Activated CD4-positive, alpha-beta memory T cell treated with anti-CD3 and anti-CD28 coated beads for 36 hours (primary cell): ENCODE measurements at regions of chr17 and their contacts with region 1.

Region 1: GRCh38 chr17:7394452-7395191 is at the start of gene PLSCR3:
- DNase-seq: peak; percentile 86
- H3K4me3 Mint-ChIP-seq: peak within 1 kb of the TSS; percentile 95
- H3K27ac Mint-ChIP-seq: peak within 1 kb of the TSS; percentile 88
- H3K4me1 Mint-ChIP-seq: peaks cover 27% of the 10 kb centered on the region
- H3K27me3 Mint-ChIP-seq: no peaks in the 10 kb centered on the region
- total RNA-seq, gene PLSCR3: 78.2 to 87.0 TPM

Region 2: GRCh38 chr17:7280519-7281429 is 113.8 kb before region 1 on chr17:
- CTCF ChIA-PET with region 1: interaction called, 4 read pairs
- POLR2A ChIA-PET with region 1: no interaction called
- intact Hi-C with region 1: loop called (anchors 5 kb)
- DNase-seq: peak; percentile 91
- H3K4me3 Mint-ChIP-seq: peak overlapping the region; percentile 65
- H3K27ac Mint-ChIP-seq: no peak overlapping the region
- H3K4me1 Mint-ChIP-seq: peaks cover 12% of the 10 kb centered on the region
- H3K27me3 Mint-ChIP-seq: peaks cover 16% of the 10 kb centered on the region

Region 3: DNA sequence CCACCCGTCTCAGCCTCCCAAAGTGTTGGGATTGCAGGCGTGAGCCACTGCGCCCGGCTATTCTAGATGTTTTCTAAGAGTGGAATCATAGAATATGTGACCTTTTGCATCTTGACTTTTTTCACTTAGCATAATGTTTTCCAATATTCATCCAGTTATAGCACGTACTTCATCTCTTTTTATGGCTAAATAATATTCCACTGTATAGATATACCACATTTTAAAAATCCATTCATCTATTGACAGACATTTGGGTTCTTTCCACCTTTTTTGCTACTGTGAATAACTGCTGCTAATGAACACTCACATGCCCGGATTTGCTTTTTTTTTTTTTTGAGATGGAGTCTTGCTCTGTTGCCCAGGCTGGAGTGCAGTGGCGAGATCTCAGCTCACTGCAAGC is 90.4 kb before region 1 on chr17:
- CTCF ChIA-PET with region 1: no interaction called
- POLR2A ChIA-PET with region 1: no interaction called
- intact Hi-C with region 1: no loop called
- DNase-seq: no peak
- H3K4me3 Mint-ChIP-seq: no peak overlapping the region
- H3K27ac Mint-ChIP-seq: no peak overlapping the region
- H3K4me1 Mint-ChIP-seq: peaks cover 2% of the 10 kb centered on the region
- H3K27me3 Mint-ChIP-seq: peaks cover 2% of the 10 kb centered on the region

Region 4: GRCh38 chr17:7745748-7746470 is 351.3 kb after region 1 on chr17:
- CTCF ChIA-PET with region 1: no interaction called
- POLR2A ChIA-PET with region 1: no interaction called
- intact Hi-C with region 1: no loop called
- DNase-seq: no peak
- H3K4me3 Mint-ChIP-seq: no peak overlapping the region
- H3K27ac Mint-ChIP-seq: no peak overlapping the region
- H3K4me1 Mint-ChIP-seq: no peaks in the 10 kb centered on the region
- H3K27me3 Mint-ChIP-seq: peaks cover 3% of the 10 kb centered on the region